Transverse colon (tissue), 4 donors: ENCODE measurements at regions of chr5 and their contacts with region 1.

Region 1: DNA sequence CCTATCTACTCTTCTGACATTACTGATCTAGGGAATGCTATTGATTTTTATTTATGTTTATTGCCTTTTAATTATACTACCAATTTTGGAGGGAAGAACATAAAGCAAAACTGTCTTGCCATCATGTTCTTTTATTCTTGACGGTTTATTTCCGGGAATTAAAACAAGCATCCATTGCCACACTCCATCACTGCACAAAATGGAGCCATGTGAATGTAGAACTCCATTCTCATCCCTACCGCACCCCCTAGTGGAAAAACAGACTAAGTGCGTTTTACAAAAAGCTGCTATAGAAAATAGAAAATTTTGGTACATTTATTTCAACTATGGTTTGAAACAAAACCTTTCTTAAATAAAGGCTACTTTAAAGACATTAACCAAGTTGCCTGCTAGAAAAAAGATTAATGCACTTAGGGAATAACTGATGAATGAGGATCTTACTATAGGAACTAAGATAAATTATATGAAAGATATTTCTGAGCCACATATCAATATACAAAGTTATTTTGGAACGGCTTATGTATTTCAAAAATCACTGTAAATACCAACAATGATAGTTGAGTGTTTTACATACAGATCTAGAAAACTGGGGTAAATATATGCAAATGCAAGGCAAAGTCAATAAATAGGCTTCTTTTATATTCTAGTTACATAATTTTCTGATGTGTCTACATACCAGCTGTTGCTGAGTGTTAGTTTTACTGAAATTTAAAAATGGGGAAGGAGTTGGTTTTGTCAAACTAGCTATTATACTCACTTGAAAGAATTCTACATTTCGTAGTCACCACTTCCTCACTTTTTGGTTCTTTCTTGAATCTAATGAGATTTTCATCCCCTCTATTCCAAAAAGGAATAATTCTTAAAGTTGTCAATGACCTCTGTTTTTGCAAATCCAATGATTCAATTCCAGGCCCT is 26.5 kb downstream of the OXCT1 start:
- DNase-seq: peak; percentile 9
- H3K4me3 ChIP-seq: no peak overlapping the region
- H3K27ac ChIP-seq: no peak overlapping the region
- H3K4me1 ChIP-seq: peaks cover 0 to 3% (median 0%) of the 10 kb centered on the region in 4 donors
- H3K27me3 ChIP-seq: no peaks in the 10 kb centered on the region
- CTCF ChIP-seq: peak; percentile 74 to 84 (median 78)
- EP300 ChIP-seq: no peak
- POLR2A ChIP-seq: no peak

Region 2: DNA sequence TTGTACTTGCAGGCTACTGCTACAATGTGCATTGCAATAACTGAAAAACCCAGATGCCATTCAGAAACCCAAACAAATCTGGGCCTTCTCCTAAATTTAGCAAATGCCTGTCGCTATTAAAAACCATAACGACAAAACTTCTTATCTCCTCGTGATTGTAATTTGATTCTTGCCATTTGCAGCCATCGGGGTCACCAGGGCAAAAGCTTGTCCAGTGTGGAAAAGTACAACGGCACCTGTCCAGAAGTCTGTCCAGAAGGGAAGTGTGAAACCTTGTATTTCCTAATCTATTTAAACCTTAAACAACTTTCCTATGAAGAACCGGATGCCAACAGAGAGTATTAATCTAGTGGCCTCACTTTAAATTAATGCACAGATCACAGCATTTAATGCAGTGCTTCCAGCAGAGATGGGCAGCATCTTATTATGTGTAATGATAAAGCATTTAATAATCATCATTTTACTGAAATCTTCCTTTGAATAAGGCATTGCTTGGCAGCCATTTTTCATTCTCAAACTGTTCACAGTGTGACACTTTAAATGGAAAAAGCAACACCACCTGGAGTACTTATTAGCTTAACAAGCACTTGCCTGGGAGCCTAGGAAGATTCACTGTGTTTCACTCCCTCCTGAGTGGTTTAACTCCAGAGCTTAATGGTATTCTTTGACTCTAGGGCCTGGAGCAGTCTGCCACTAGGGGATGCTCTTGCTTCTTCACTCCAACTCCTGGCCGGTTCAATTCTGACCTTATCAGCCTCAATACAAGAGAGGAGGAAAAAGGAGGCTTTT is 939.3 kb before region 1 on chr5:
- in situ Hi-C with region 1: loop called in 2 of 4 experiments (anchors 25 kb)
- intact Hi-C with region 1: no loop called
- DNase-seq: peak; percentile 70
- H3K4me3 ChIP-seq: no peak overlapping the region
- H3K27ac ChIP-seq: no peak overlapping the region
- H3K4me1 ChIP-seq: peaks cover 0 to 21% (median 7%) of the 10 kb centered on the region in 4 donors
- H3K27me3 ChIP-seq: no peaks in the 10 kb centered on the region
- CTCF ChIP-seq: peak; percentile 84 to 94 (median 87)
- EP300 ChIP-seq: no peak
- POLR2A ChIP-seq: no peak

Region 3: GRCh38 chr5:41707853-41708603 is 135.7 kb before region 1 on chr5:
- in situ Hi-C with region 1: loop called in 1 of 4 experiments (anchors 25 kb)
- intact Hi-C with region 1: no loop called
- DNase-seq: no peak
- H3K4me3 ChIP-seq: no peak overlapping the region
- H3K27ac ChIP-seq: no peak overlapping the region
- H3K4me1 ChIP-seq: no peaks in the 10 kb centered on the region
- H3K27me3 ChIP-seq: no peaks in the 10 kb centered on the region
- CTCF ChIP-seq: peak in 4 of 5 experiments; percentile 24 to 41 (median 32)
- EP300 ChIP-seq: no peak
- POLR2A ChIP-seq: no peak

Region 4: GRCh38 chr5:42216904-42217303 is 373.2 kb after region 1 on chr5:
- in situ Hi-C with region 1: no loop called
- intact Hi-C with region 1: no loop called
- DNase-seq: no peak
- H3K4me3 ChIP-seq: no peak overlapping the region
- H3K27ac ChIP-seq: no peak overlapping the region
- H3K4me1 ChIP-seq: no peaks in the 10 kb centered on the region
- H3K27me3 ChIP-seq: no peaks in the 10 kb centered on the region
- CTCF ChIP-seq: no peak
- EP300 ChIP-seq: no peak
- POLR2A ChIP-seq: no peak

Region 5: GRCh38 chr5:42531611-42532010 is 687.9 kb after region 1 on chr5:
- in situ Hi-C with region 1: no loop called
- intact Hi-C with region 1: no loop called
- DNase-seq: no peak
- H3K4me3 ChIP-seq: no peak overlapping the region
- H3K27ac ChIP-seq: no peak overlapping the region
- H3K4me1 ChIP-seq: no peaks in the 10 kb centered on the region
- H3K27me3 ChIP-seq: no peaks in the 10 kb centered on the region
- CTCF ChIP-seq: no peak
- EP300 ChIP-seq: no peak
- POLR2A ChIP-seq: no peak